PC-3 (cell line): ENCODE measurements at regions of chrX and their contacts with region 1.

Region 1: DNA sequence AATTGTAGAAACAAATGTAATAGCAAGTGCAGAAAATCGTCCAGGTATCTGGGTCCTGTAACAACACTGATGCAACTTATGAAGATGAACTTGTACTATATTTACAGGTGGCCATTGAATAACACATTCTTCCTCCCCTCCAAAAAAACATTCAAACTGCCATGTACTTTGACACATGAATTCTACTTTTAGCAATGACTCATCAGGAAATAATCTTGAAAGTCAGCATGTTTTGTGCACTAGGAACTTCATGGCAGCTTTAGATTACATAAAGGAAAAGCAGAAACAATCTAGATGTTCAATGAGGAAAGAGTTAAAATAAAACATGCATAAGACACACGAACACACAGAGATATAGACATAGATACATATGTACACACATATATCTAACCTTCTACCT is 2.5 kb downstream of the PABPC1L2A start:
- DNase-seq: peak; percentile 25
- ATAC-seq: no peak
- H3K4me3 ChIP-seq: no peak overlapping the region
- H3K27ac ChIP-seq: no peak overlapping the region
- H3K4me1 ChIP-seq: 0 out of 2 replicates have a peak, but pooled peaks cover 3% of the 10 kb centered on the region
- H3K27me3 ChIP-seq: no peaks in the 10 kb centered on the region
- CTCF ChIP-seq: no peak

Region 2: GRCh38 chrX:73127700-73128241 is 50.9 kb after region 1 on chrX:
- CTCF ChIA-PET with region 1: no interaction called
- POLR2A ChIA-PET with region 1: no interaction called
- intact Hi-C with region 1: no loop called
- DNase-seq: peak; percentile 51
- ATAC-seq: peak; percentile 74
- H3K4me3 ChIP-seq: peak overlapping the region; percentile 65
- H3K27ac ChIP-seq: no peak overlapping the region
- H3K4me1 ChIP-seq: no peaks in the 10 kb centered on the region
- H3K27me3 ChIP-seq: no peaks in the 10 kb centered on the region
- CTCF ChIP-seq: peak; percentile 49

Region 3: DNA sequence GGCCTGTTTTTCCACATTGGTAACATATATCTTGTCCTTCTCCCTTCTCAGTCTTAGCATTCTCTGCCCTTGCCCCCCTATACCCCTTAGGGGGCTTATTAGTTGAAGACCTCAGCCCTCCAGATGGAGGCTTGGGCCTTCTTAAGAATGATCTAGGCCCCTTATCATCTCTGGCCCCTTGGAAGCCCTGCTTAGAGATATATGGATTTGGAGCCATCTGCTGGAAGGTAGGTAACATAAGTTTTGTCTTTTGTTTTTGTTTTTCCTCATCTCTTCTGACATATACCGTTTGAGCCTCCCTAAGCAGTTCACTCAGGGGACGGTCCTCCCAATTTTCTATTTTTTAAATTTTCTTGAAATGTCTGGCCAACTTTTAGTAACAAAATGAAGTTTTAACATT is 186.2 kb after region 1 on chrX:
- CTCF ChIA-PET with region 1: no interaction called
- POLR2A ChIA-PET with region 1: no interaction called
- intact Hi-C with region 1: loop called (anchors 10 kb)
- DNase-seq: peak; percentile 38
- ATAC-seq: peak; percentile 65; the same call in 1 of the 2 replicates
- H3K4me3 ChIP-seq: no peak overlapping the region
- H3K27ac ChIP-seq: no peak overlapping the region
- H3K4me1 ChIP-seq: no peaks in the 10 kb centered on the region
- H3K27me3 ChIP-seq: no peaks in the 10 kb centered on the region
- CTCF ChIP-seq: peak; percentile 60

Region 4: DNA sequence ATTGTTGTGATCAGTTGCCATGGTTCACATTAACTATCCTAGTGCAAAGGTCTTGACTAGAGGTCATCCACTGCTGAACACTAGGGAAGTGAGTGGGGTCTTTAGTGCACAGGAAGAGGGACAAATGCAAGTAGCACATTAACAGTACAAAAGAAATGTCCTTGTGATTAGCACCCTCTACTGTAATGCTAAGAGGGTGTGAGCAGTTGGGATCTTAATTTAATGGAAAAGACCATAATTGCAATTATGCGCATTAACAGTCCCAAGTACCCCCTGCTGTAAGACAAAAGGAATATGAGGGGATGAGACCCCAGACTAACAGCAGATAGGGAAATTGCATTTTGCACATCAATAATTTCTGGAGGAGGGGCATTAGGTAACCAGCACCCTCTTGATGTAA is 771.1 kb after region 1 on chrX:
- CTCF ChIA-PET with region 1: no interaction called
- POLR2A ChIA-PET with region 1: no interaction called
- intact Hi-C with region 1: loop called (anchors 10 kb)
- DNase-seq: no peak
- ATAC-seq: no peak
- H3K4me3 ChIP-seq: no peak overlapping the region
- H3K27ac ChIP-seq: no peak overlapping the region
- H3K4me1 ChIP-seq: no peaks in the 10 kb centered on the region
- H3K27me3 ChIP-seq: no peaks in the 10 kb centered on the region
- CTCF ChIP-seq: peak; percentile 22; the same call in 1 of the 2 replicates